ENCODE measurements at regions of chr4 and their contacts with region 1.

Region 1: GRCh38 chr4:124334119-124334518 is 378.4 kb downstream of the ANKRD50 start:
- DNase-seq: no peak
- ATAC-seq: peak in 3 of 4 donors; percentile 57 to 78 (median 59)
- H3K4me3 ChIP-seq: no peak overlapping the region
- H3K27ac ChIP-seq: no peak overlapping the region
- H3K4me1 ChIP-seq: no peaks in the 10 kb centered on the region
- H3K27me3 ChIP-seq: no peaks in the 10 kb centered on the region
- CTCF ChIP-seq: peak; percentile 59

Region 2: DNA sequence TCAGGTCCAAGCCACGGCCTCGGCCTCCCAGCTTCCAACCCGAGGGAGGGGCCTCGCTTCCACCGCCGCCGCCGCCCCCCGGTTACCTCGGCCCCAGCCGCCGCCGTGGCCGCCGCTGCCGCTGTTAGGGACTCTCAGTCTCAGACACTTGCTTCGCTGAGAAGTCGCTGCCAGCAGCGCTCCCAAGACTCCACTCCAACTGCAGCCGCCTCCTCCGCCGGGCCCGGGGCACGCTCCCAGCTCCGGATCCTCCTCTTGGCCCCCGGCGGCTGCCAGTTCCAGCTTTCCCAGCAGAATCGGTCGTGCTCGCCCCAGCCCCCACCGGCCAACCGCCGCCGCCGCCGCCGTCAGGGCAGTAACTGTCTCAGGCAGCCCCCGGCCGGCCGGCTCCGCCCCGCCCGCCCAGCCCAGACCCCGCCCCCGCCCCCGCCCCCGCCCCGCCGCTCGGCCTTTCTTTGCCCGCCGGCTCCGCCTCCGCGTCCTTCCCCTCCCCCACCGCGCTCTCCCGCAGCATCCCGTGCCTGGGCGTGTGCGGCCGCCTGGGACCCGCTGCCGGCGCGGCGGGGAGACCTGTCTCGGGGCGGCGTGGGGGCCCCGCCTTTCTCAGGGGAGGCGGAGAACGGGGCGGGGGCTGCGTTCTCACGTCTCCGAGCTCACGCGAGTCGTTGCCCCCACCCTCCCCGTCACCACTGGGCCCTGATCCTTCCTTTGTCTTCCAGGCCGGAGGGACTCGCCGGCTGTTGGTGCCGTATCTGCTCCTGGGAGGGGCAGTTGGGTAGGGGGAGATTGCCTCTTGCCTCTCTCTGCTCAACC is 378.5 kb after region 1 on chr4 and contains the start of gene ANKRD50:
- intact Hi-C with region 1: loop called (anchors 10 kb)
- DNase-seq: peak; percentile 89 to 92
- ATAC-seq: peak; percentile 87 to 91 (median 90)
- H3K4me3 ChIP-seq: peak within 1 kb of the TSS; percentile 83
- H3K27ac ChIP-seq: peak within 1 kb of the TSS; percentile 90
- H3K4me1 ChIP-seq: peaks cover 22% of the 10 kb centered on the region
- H3K27me3 ChIP-seq: no peaks in the 10 kb centered on the region
- CTCF ChIP-seq: no peak
- total RNA-seq, gene ANKRD50: 2.9 to 7.0 (median 4.8) TPM

Region 3: GRCh38 chr4:125235971-125236370 is 901.9 kb after region 1 on chr4:
- intact Hi-C with region 1: loop called in 1 of 2 experiments (anchors 5 kb)
- DNase-seq: no peak
- ATAC-seq: no peak
- H3K4me3 ChIP-seq: no peak overlapping the region
- H3K27ac ChIP-seq: no peak overlapping the region
- H3K4me1 ChIP-seq: no peaks in the 10 kb centered on the region
- H3K27me3 ChIP-seq: no peaks in the 10 kb centered on the region
- CTCF ChIP-seq: no peak

Region 4: DNA sequence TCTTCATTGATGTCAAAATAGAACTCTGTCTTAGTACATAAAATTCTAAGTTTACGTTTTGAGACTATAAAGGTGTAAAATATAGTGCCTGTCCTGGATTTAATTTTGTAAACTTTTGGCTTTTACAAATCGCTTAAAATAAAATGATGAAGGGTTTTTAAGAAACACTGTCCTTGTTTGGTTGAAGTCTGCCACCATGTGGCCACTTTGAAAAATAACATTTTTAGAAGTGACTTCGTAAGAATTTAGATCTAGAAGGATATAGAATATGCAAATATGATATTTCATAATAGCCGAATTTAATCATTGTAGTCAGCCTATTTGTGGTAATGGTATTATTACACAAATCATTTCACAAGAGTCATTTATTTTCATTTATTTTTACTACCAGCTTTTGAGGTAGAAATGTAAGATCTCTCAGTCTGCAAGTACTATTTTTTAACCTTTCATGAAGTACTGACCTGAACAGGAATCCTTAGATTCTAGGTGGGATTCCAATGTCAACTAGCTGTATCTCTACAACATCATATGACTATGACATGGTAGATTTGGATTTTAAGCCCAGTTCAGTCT is 949.7 kb after region 1 on chr4:
- intact Hi-C with region 1: loop called in 1 of 2 experiments (anchors 2 kb)
- DNase-seq: no peak
- ATAC-seq: no peak
- H3K4me3 ChIP-seq: no peak overlapping the region
- H3K27ac ChIP-seq: no peak overlapping the region
- H3K4me1 ChIP-seq: no peaks in the 10 kb centered on the region
- H3K27me3 ChIP-seq: no peaks in the 10 kb centered on the region
- CTCF ChIP-seq: peak; percentile 57